HEK293T (cell line): ENCODE measurements at regions of chr16 and their contacts with region 1.

Region 1: DNA sequence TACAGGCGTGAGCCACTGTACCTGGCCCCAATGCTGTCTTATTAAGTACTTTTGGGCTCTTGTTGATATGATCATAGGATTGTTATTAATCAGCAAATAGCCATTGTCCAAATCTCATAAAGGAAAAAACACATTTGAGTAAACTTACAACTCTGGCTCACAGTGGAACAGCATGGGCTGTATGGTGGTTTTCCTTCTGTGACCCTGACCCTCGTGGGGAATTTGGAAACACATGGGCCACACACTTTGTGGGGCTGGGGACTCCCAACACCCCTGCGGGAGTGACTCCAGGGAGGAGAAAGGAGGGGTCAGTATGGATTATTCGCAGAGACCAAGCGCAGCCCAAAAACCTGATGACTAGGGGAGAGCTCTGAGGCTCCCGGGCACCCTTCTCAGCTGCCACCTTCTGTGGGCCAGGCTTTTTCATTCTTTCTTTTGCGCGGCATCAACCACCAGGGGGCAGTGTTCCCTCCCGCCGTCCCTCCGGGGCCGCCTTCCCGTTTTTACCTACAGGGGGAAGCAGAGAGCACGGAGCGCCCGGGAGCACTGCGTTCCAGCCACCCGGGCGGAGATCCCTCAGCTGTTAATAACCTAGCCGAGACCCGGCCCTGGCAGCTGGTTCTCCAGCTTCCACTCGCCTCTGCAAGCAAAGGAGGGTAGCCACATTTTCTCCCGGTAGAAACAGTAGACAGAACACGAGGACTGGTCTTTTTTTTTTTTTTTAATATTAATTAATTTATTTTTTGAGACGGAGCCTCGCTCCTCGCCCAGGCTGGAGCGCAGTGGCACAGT is 9.7 kb downstream of the TSNAXIP1 start:
- DNase-seq: peak; percentile 94

Region 2: GRCh38 chr16:67719048-67719777 is 97.2 kb before region 1 on chr16 and contains the start of gene GFOD2:
- CTCF ChIA-PET with region 1: no interaction called
- POLR2A ChIA-PET with region 1: no interaction called
- DNase-seq: peak; percentile 100

Region 3: GRCh38 chr16:67841764-67842508 is 25.5 kb after region 1 on chr16 and contains the start of gene THAP11:
- CTCF ChIA-PET with region 1: interaction called, 14 read pairs
- POLR2A ChIA-PET with region 1: interaction called, 5 read pairs
- DNase-seq: peak; percentile 90

Region 4: GRCh38 chr16:67862623-67863583 is 46.5 kb after region 1 on chr16:
- CTCF ChIA-PET with region 1: interaction called, 12 read pairs
- POLR2A ChIA-PET with region 1: no interaction called
- DNase-seq: no peak